Heart left ventricle (tissue), 16 donors: ENCODE measurements at regions of chr2 and their contacts with region 1.

Region 1: GRCh38 chr2:43484323-43484930 is 111.4 kb downstream of the THADA start:
- DNase-seq: no peak
- ATAC-seq: peak; percentile 43 to 73 (median 62)
- H3K4me3 ChIP-seq: no peak overlapping the region
- H3K27ac ChIP-seq: peak overlapping the region in 7 of 12 donors; percentile 11 to 72 (median 42)
- H3K4me1 ChIP-seq: peaks cover 0 to 56% (median 20%) of the 10 kb centered on the region in 12 donors
- H3K27me3 ChIP-seq: no peaks in the 10 kb centered on the region
- CTCF ChIP-seq: peak; percentile 56 to 84 (median 68)
- POLR2A ChIP-seq: no peak

Region 2: GRCh38 chr2:42859006-42859552 is 625.3 kb before region 1 on chr2:
- intact Hi-C with region 1: loop called in 2 of 10 experiments (anchors 10 kb)
- DNase-seq: peak in 2 of 5 donors; percentile 57 to 58
- ATAC-seq: peak in 1 of 4 donors; percentile 20
- H3K4me3 ChIP-seq: no peak overlapping the region
- H3K27ac ChIP-seq: peak overlapping the region in 4 of 12 donors; percentile 7 to 52 (median 31)
- H3K4me1 ChIP-seq: peaks cover 0 to 14% (median 7%) of the 10 kb centered on the region in 12 donors
- H3K27me3 ChIP-seq: no peaks in the 10 kb centered on the region
- CTCF ChIP-seq: peak; percentile 75 to 93 (median 87)
- POLR2A ChIP-seq: no peak

Region 3: DNA sequence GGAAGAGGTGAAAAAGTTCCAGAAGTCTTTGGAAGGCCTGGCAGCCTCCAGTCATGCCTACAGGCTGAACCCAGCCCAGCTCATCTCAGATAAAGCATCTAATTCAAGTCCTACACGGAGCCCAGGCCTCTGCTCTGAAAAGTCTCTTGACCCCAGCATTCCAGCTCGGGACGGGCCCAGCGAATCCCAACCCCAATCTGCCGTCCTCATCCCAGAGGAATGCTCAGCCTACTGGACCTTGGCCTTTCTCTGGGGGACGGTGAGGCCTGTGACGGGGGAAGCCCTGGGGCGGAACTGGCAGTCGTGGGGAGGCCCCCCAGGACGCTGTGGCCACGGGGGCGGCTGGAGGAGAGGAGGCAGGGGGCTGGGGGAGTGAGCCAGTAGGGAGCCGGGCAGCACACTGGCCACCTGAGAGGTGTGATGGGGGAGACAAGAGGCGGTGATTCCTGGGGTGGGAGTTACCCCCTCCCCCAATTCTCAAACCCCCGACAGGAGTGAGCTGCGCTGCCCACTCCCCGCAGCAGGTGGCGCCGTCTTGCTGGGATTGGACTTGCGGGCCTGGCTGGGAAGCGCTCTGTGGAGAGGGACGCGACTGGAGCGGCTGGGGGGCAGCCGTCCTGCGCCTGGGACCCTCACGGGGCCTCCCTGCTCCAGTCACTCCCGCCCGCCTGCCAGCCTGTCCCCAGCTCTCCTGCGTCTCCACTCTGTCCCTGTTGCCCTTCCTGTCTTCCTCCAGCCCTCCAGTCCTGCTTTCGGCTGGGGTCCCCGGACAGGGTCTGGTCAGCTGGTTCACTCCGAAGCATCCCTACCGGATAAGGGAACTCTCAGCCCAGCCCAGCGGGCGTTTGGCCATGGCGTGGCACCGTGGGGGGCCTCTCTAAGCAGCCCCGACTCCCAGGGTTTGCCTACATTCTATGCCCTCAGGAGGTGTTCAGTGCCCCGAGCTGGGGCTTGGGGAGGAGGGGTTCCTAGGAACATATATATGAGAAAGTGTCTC is 509.4 kb before region 1 on chr2:
- intact Hi-C with region 1: loop called (anchors 2 to 10 kb)
- DNase-seq: peak; percentile 74 to 90 (median 79)
- ATAC-seq: peak; percentile 57 to 91 (median 87)
- H3K4me3 ChIP-seq: peak overlapping the region in 11 of 12 donors; percentile 7 to 59 (median 48)
- H3K27ac ChIP-seq: peak overlapping the region in 10 of 12 donors; percentile 22 to 83 (median 48)
- H3K4me1 ChIP-seq: peaks cover 0 to 23% (median 12%) of the 10 kb centered on the region in 12 donors
- H3K27me3 ChIP-seq: no peaks in the 10 kb centered on the region
- CTCF ChIP-seq: peak; percentile 72 to 95 (median 89)
- POLR2A ChIP-seq: no peak

Region 4: DNA sequence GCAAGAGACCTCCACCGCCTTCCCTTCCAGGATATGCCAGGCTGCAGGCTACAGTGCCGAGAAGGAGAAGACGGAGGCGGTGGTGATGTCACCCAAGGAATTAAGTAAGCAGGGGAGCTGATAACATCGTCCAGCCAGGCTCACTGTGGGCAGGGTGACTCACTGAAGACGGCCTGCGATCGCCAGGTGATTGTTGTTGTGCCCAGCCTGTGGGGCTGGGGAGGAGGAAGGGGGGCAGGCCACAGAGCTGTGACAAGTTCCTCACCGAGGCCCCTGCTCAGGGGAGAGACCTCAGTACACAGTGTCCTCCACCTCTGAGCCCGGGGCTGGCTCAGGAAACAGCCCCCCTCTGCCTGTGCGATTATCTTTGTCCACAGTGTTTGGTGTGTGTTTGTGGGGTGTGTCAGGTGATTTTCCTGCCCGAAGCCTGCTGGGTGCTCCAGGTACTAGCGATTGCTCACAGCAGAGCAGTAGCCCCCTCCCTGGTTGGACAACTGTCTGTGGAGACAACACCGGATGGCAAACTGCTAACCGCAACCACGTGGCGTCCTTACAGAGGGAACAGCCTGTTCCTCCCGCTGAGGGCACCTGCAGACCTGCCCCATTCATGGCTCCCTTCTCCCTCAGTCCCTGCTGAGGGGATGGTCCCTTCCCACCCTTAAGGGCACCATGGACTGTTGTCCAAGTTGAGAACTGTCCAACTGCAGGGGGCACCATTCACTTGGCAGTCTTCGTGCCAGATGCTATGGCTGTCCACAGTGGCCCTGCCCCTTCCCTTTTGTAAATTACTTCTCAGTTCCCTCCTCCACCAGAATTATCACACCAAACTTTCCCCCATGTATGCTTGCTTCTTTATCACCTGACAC is 353.2 kb before region 1 on chr2:
- intact Hi-C with region 1: loop called in 7 of 10 experiments (anchors 2 to 10 kb)
- DNase-seq: peak; percentile 65 to 87 (median 74)
- ATAC-seq: peak; percentile 57 to 66 (median 60)
- H3K4me3 ChIP-seq: peak overlapping the region in 1 of 12 donors; percentile 6
- H3K27ac ChIP-seq: peak overlapping the region; percentile 19 to 94 (median 60)
- H3K4me1 ChIP-seq: peaks cover 7 to 97% (median 43%) of the 10 kb centered on the region in 12 donors
- H3K27me3 ChIP-seq: no peaks in the 10 kb centered on the region
- CTCF ChIP-seq: peak; percentile 23 to 63 (median 45)
- POLR2A ChIP-seq: no peak

Region 5: DNA sequence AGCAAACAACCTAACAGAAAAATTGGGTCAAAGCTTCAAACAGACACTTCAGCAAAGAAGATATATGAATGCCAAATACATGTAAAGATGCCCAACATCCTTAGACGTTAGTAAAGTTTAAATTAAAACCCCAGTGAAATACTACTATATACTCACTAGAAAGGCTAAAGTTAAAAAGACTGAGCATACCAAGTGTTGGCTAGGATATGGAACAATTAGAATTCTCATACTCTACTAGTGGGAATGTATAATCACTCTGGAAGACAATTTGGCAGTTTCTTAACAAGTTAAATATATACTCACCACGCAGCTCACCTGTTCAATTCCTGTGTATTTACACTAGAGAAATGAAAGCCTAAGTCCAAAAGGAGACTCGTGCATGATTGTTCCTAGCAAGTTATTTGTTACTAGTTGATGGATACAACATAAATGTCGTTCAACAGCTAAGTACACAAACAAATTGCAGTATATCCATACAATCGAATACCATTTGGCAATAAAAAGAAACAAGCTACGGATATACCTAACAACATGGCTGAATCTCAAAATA is 74.3 kb before region 1 on chr2:
- intact Hi-C with region 1: no loop called
- DNase-seq: no peak
- ATAC-seq: no peak
- H3K4me3 ChIP-seq: no peak overlapping the region
- H3K27ac ChIP-seq: no peak overlapping the region
- H3K4me1 ChIP-seq: peaks cover 0 to 63% (median 41%) of the 10 kb centered on the region in 12 donors
- H3K27me3 ChIP-seq: no peaks in the 10 kb centered on the region
- CTCF ChIP-seq: no peak
- POLR2A ChIP-seq: no peak

Region 6: GRCh38 chr2:43426305-43427031 is 58.0 kb before region 1 on chr2:
- intact Hi-C with region 1: no loop called
- DNase-seq: peak; percentile 30 to 68 (median 37)
- ATAC-seq: peak in 3 of 4 donors; percentile 68 to 79 (median 68)
- H3K4me3 ChIP-seq: no peak overlapping the region
- H3K27ac ChIP-seq: peak overlapping the region in 7 of 12 donors; percentile 14 to 80 (median 30)
- H3K4me1 ChIP-seq: peaks cover 0 to 34% (median 8%) of the 10 kb centered on the region in 12 donors
- H3K27me3 ChIP-seq: no peaks in the 10 kb centered on the region
- CTCF ChIP-seq: no peak
- POLR2A ChIP-seq: no peak

Region 7: DNA sequence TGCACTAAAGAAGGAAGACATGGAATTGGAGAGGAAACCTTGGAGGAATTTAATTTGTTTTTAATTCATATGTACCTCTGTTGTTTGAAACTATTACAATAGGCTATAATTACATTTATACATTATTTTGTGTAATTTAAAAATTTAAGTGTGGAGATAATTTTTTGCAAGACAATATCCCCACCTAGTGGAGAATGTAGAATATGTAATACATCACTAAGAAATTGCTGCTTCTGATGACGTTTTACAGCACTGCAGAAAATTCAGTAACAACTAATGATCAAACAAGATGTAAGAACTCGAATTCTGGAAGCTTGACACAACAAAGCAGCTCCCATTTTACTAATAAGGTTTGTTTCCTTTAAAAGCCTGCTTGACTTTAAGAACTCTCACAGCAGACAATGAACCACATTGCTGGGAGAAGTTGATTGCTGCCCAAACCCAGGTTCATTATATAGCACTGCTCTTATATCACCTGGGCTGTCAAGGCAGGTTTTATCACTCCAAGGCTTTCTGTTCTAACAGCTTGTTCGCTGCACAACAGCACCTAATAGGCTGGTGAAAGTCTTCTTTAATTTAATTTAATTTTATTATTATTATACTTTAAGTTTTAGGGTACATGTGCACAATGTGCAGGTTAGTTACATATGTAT is 58.0 kb after region 1 on chr2:
- intact Hi-C with region 1: loop called in 1 of 10 experiments (anchors 2 kb)
- DNase-seq: no peak
- ATAC-seq: peak in 1 of 4 donors; percentile 33
- H3K4me3 ChIP-seq: no peak overlapping the region
- H3K27ac ChIP-seq: peak overlapping the region in 1 of 12 donors; percentile 62
- H3K4me1 ChIP-seq: peaks cover 0 to 28% (median 2%) of the 10 kb centered on the region in 12 donors
- H3K27me3 ChIP-seq: no peaks in the 10 kb centered on the region
- CTCF ChIP-seq: peak; percentile 50 to 74 (median 60)
- POLR2A ChIP-seq: no peak